ENCODE measurements at regions of chr7 and their contacts with region 1.

Region 1: GRCh38 chr7:23531794-23532489 is at the start of gene TRA2A:
- H3K4me3 ChIP-seq: peak within 1 kb of the TSS; percentile 92
- H3K27ac ChIP-seq: peak within 1 kb of the TSS; percentile 96
- H3K4me1 ChIP-seq: peaks cover 10% of the 10 kb centered on the region
- CTCF ChIP-seq: no peak

Region 2: DNA sequence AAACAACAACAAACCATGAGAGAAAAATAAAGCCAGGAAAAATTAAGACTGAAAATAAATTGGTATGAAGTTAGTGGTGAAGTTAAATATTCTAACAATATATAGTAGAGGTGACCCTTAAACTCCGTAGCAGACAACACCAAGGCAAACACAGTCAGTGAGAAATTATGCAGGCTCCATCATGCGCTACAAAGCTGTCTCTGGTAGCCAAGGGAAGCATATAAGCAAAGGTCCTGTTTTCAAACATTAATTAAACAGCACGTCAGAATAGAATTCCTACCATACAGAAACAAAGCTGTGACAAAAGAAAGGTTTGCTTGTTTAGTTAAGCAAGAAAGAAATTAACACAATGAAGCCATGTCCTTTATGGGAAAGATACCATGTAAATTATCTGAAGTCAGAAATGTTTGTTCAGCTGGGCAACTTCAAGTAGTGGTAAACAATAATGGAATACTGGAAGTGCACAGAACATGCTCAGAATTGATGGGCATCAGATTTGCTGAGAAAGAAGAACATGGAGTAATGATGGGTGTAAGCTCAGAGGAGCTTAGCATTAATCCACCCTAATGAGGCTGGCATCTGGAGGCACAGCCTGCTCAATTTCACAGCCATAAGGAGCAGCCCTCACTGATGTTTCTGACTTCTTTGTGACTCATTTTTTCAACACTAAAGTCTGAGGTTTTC is 137.3 kb before region 1 on chr7:
- CTCF ChIA-PET with region 1: no interaction called
- POLR2A ChIA-PET with region 1: no interaction called
- H3K4me3 ChIP-seq: no peak overlapping the region
- H3K27ac ChIP-seq: 0 out of 2 replicates have a peak overlapping the region, but pooled peaks have one; percentile 11
- H3K4me1 ChIP-seq: peaks cover 10% of the 10 kb centered on the region
- CTCF ChIP-seq: no peak

Region 3: GRCh38 chr7:23472956-23473843 is 58.7 kb before region 1 on chr7:
- CTCF ChIA-PET with region 1: interaction called, 5 read pairs
- POLR2A ChIA-PET with region 1: interaction called, 11 read pairs
- H3K4me3 ChIP-seq: peak overlapping the region; percentile 84
- H3K27ac ChIP-seq: peak overlapping the region; percentile 97
- H3K4me1 ChIP-seq: peaks cover 18% of the 10 kb centered on the region
- CTCF ChIP-seq: no peak

Region 4: DNA sequence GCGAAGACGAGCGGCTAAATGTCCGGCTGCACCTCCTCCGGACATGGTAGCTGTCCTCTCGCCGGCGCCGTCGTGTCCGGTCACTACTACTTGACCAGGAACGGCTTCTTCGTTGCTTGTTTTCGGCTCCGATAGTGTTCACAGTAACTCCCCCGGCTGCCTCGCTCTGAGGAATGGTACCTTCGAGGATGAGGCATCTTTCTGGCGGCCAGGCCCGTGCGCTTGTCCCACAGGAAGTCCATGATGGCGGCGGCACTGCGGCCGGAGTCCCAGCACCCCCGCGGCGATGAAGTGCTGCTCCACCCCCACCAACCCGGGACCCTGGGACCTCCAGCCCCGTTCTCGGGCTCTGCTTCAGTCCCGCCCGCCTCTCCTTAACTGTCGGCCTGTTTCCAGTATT is 54.2 kb after region 1 on chr7:
- CTCF ChIA-PET with region 1: no interaction called
- POLR2A ChIA-PET with region 1: no interaction called
- H3K4me3 ChIP-seq: no peak overlapping the region
- H3K27ac ChIP-seq: no peak overlapping the region
- H3K4me1 ChIP-seq: no peaks in the 10 kb centered on the region
- CTCF ChIP-seq: no peak